ENCODE measurements at regions of chr2 and their contacts with region 1.

Region 1: GRCh38 chr2:212979799-212980198 is 171.6 kb downstream of the IKZF2 start:
- DNase-seq: peak in 1 of 2 donors; percentile 31
- ATAC-seq: peak; percentile 70 to 82 (median 82)
- H3K4me3 ChIP-seq: no peak overlapping the region
- H3K4me3 Mint-ChIP-seq: peak overlapping the region; percentile 85
- H3K27ac ChIP-seq: peak overlapping the region; percentile 64
- H3K27ac Mint-ChIP-seq: peak overlapping the region; percentile 75 to 83
- H3K4me1 ChIP-seq: peaks cover 9% of the 10 kb centered on the region
- H3K4me1 Mint-ChIP-seq: peaks cover 37 to 47% of the 10 kb centered on the region in 2 donors
- H3K27me3 ChIP-seq: no peaks in the 10 kb centered on the region
- H3K27me3 Mint-ChIP-seq: no peaks in the 10 kb centered on the region
- CTCF ChIP-seq: no peak

Region 2: GRCh38 chr2:212618641-212619040 is 361.2 kb before region 1 on chr2:
- intact Hi-C with region 1: no loop called
- DNase-seq: no peak
- ATAC-seq: no peak
- H3K4me3 ChIP-seq: no peak overlapping the region
- H3K4me3 Mint-ChIP-seq: no peak overlapping the region
- H3K27ac ChIP-seq: no peak overlapping the region
- H3K27ac Mint-ChIP-seq: no peak overlapping the region
- H3K4me1 ChIP-seq: no peaks in the 10 kb centered on the region
- H3K4me1 Mint-ChIP-seq: no peaks in the 10 kb centered on the region
- H3K27me3 ChIP-seq: no peaks in the 10 kb centered on the region
- H3K27me3 Mint-ChIP-seq: peaks cover 7 to 34% of the 10 kb centered on the region in 2 donors
- CTCF ChIP-seq: no peak

Region 3: GRCh38 chr2:212957624-212958532 is 21.9 kb before region 1 on chr2:
- intact Hi-C with region 1: no loop called
- DNase-seq: no peak
- ATAC-seq: peak in 1 of 3 donors; percentile 59
- H3K4me3 ChIP-seq: no peak overlapping the region
- H3K4me3 Mint-ChIP-seq: peak overlapping the region; percentile 89
- H3K27ac ChIP-seq: peak overlapping the region; percentile 70
- H3K27ac Mint-ChIP-seq: peak overlapping the region; percentile 89 to 92
- H3K4me1 ChIP-seq: peaks cover 28% of the 10 kb centered on the region
- H3K4me1 Mint-ChIP-seq: peaks cover 73 to 82% of the 10 kb centered on the region in 2 donors
- H3K27me3 ChIP-seq: no peaks in the 10 kb centered on the region
- H3K27me3 Mint-ChIP-seq: no peaks in the 10 kb centered on the region
- CTCF ChIP-seq: no peak

Region 4: GRCh38 chr2:212968280-212968679 is 11.5 kb before region 1 on chr2:
- intact Hi-C with region 1: loop called (anchors 1 kb)
- DNase-seq: no peak
- ATAC-seq: peak; percentile 24 to 49 (median 30)
- H3K4me3 ChIP-seq: no peak overlapping the region
- H3K4me3 Mint-ChIP-seq: peak overlapping the region; percentile 56
- H3K27ac ChIP-seq: peak overlapping the region; percentile 54
- H3K27ac Mint-ChIP-seq: peak overlapping the region; percentile 87 to 94
- H3K4me1 ChIP-seq: no peaks in the 10 kb centered on the region
- H3K4me1 Mint-ChIP-seq: peaks cover 37 to 43% of the 10 kb centered on the region in 2 donors
- H3K27me3 ChIP-seq: no peaks in the 10 kb centered on the region
- H3K27me3 Mint-ChIP-seq: no peaks in the 10 kb centered on the region
- CTCF ChIP-seq: no peak

Region 5: GRCh38 chr2:212990697-212991096 is 10.9 kb after region 1 on chr2:
- intact Hi-C with region 1: no loop called
- DNase-seq: no peak
- ATAC-seq: peak in 1 of 3 donors; percentile 47
- H3K4me3 ChIP-seq: no peak overlapping the region
- H3K4me3 Mint-ChIP-seq: no peak overlapping the region
- H3K27ac ChIP-seq: no peak overlapping the region
- H3K27ac Mint-ChIP-seq: peak overlapping the region; percentile 27 to 48
- H3K4me1 ChIP-seq: no peaks in the 10 kb centered on the region
- H3K4me1 Mint-ChIP-seq: peaks cover 5% of the 10 kb centered on the region in 2 donors
- H3K27me3 ChIP-seq: no peaks in the 10 kb centered on the region
- H3K27me3 Mint-ChIP-seq: no peaks in the 10 kb centered on the region
- CTCF ChIP-seq: no peak